Panc1 (cell line): ENCODE measurements at regions of chr3 and their contacts with region 1.

Region 1: DNA sequence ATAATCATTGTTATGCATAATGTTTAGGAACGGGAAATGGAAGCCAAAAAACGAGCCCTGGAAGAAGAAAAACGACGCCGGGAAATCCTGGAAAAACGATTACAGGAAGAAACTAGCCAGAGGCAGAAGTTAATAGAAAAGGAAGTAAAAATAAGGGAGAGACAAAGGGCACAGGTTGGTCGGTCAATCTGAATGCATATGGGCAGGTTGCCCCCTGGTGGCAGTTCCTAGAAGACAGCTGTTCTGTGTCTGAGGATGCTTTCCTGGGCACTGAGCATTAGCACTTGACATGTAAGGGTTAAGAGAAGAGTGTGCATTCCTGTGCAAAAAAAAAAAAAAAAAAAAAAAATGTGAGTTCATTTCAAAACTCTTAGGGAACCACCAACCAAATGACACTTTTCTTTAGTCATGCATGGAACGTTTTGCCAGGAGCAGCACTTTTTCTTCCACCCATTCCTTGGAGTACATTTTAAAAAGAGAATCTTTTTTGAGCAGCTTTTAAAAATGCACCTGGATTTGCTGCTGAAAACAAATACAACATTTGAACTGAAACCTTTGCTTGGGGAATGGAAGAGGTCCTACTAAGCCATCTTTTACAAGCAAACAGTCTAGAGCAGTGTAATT is 11.1 kb upstream of the ABHD10 start:
- DNase-seq: peak; percentile 58
- ATAC-seq: peak; percentile 97
- H3K4me3 ChIP-seq: no peak overlapping the region
- H3K27ac ChIP-seq: no peak overlapping the region
- H3K4me1 ChIP-seq: 0 out of 2 replicates have a peak, but pooled peaks cover 2% of the 10 kb centered on the region
- H3K27me3 ChIP-seq: 0 out of 2 replicates have a peak, but pooled peaks cover 2% of the 10 kb centered on the region
- CTCF ChIP-seq: peak; percentile 91

Region 2: DNA sequence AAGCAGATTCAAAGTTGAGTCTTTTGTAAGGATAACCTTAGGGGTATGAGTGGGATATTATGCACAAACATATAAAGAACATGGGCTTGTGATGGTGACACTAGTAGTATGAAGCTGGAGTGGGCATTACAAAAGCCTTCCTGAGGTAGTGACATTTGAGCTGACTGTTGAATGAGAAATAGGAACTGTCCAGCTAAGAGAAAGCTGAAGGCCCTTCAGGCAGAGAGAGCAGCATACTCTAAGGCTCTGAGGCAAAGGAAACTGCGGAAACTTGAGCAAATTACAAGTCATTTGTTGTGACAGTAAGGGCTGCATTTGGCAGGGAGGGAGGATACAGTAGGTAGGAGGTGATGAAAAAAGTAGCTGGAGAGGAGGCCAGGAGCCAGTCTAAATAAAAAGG is 616.4 kb before region 1 on chr3:
- CTCF ChIA-PET with region 1: interaction called, 13 read pairs
- POLR2A ChIA-PET with region 1: no interaction called
- in situ Hi-C with region 1: no loop called
- intact Hi-C with region 1: no loop called
- DNase-seq: no peak
- ATAC-seq: no peak
- H3K4me3 ChIP-seq: no peak overlapping the region
- H3K27ac ChIP-seq: no peak overlapping the region
- H3K4me1 ChIP-seq: no peaks in the 10 kb centered on the region
- H3K27me3 ChIP-seq: no peaks in the 10 kb centered on the region
- CTCF ChIP-seq: no peak

Region 3: GRCh38 chr3:111434941-111435622 is 532.7 kb before region 1 on chr3:
- CTCF ChIA-PET with region 1: no interaction called
- POLR2A ChIA-PET with region 1: no interaction called
- in situ Hi-C with region 1: no loop called
- intact Hi-C with region 1: no loop called
- DNase-seq: no peak
- ATAC-seq: no peak
- H3K4me3 ChIP-seq: no peak overlapping the region
- H3K27ac ChIP-seq: no peak overlapping the region
- H3K4me1 ChIP-seq: no peaks in the 10 kb centered on the region
- H3K27me3 ChIP-seq: no peaks in the 10 kb centered on the region
- CTCF ChIP-seq: no peak

Region 4: GRCh38 chr3:111717601-111718000 is 250.2 kb before region 1 on chr3:
- CTCF ChIA-PET with region 1: interaction called, 17 read pairs
- POLR2A ChIA-PET with region 1: no interaction called
- in situ Hi-C with region 1: no loop called
- intact Hi-C with region 1: loop called (anchors 1 kb)
- DNase-seq: peak; percentile 71
- ATAC-seq: peak; percentile 98
- H3K4me3 ChIP-seq: no peak overlapping the region
- H3K27ac ChIP-seq: no peak overlapping the region
- H3K4me1 ChIP-seq: no peaks in the 10 kb centered on the region; the same call in 1 of the 2 replicates
- H3K27me3 ChIP-seq: peaks cover 2% of the 10 kb centered on the region; the same call in 1 of the 2 replicates
- CTCF ChIP-seq: peak; percentile 94

Region 5: GRCh38 chr3:111895079-111895478 is 72.7 kb before region 1 on chr3:
- CTCF ChIA-PET with region 1: interaction called, 12 read pairs
- POLR2A ChIA-PET with region 1: no interaction called
- in situ Hi-C with region 1: no loop called
- intact Hi-C with region 1: loop called (anchors 1 kb)
- DNase-seq: peak; percentile 30
- ATAC-seq: peak; percentile 87; the same call in 1 of the 2 replicates
- H3K4me3 ChIP-seq: no peak overlapping the region
- H3K27ac ChIP-seq: no peak overlapping the region
- H3K4me1 ChIP-seq: no peaks in the 10 kb centered on the region; the same call in 1 of the 2 replicates
- H3K27me3 ChIP-seq: no peaks in the 10 kb centered on the region
- CTCF ChIP-seq: peak; percentile 62; the same call in 1 of the 2 replicates

Region 6: GRCh38 chr3:111921181-111921580 is 46.6 kb before region 1 on chr3:
- CTCF ChIA-PET with region 1: interaction called, 10 read pairs
- POLR2A ChIA-PET with region 1: no interaction called
- in situ Hi-C with region 1: no loop called
- intact Hi-C with region 1: no loop called
- DNase-seq: no peak
- ATAC-seq: no peak
- H3K4me3 ChIP-seq: no peak overlapping the region
- H3K27ac ChIP-seq: no peak overlapping the region
- H3K4me1 ChIP-seq: no peaks in the 10 kb centered on the region; the same call in 1 of the 2 replicates
- H3K27me3 ChIP-seq: no peaks in the 10 kb centered on the region
- CTCF ChIP-seq: no peak

Region 7: GRCh38 chr3:113638910-113639309 is 1671.1 kb after region 1 on chr3:
- CTCF ChIA-PET with region 1: interaction called, 15 read pairs
- POLR2A ChIA-PET with region 1: no interaction called
- in situ Hi-C with region 1: no loop called
- intact Hi-C with region 1: no loop called
- DNase-seq: no peak
- ATAC-seq: no peak
- H3K4me3 ChIP-seq: no peak overlapping the region
- H3K27ac ChIP-seq: no peak overlapping the region
- H3K4me1 ChIP-seq: no peaks in the 10 kb centered on the region
- H3K27me3 ChIP-seq: no peaks in the 10 kb centered on the region
- CTCF ChIP-seq: no peak